ENCODE measurements at regions of chr1 and their contacts with region 1.

Region 1: GRCh38 chr1:41783189-41783639 is 135.5 kb downstream of the HIVEP3 start:
- DNase-seq: peak; percentile 91
- H3K4me3 ChIP-seq: no peak overlapping the region
- H3K27ac ChIP-seq: no peak overlapping the region
- H3K4me1 ChIP-seq: peaks cover 12% of the 10 kb centered on the region
- H3K27me3 ChIP-seq: no peaks in the 10 kb centered on the region
- CTCF ChIP-seq: no peak

Region 2: DNA sequence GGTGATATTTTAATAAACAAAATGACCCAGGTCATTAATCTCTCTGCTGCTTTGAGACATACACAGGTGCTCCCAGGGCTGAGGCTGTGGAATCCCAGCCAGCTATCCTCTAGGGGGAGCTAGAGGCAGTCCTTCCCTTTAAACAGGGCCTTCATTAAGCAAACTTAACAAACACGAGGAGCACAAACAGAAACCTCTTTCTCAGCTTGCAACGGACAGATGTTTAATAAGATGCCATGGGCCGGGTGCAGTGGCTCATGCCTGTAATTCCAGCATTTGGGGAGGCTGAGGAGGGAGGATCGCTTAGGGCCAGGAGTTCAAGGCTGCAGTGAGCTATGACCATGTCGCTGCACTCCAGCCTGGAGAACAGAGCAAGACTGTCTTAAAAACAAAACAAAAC is 28.8 kb after region 1 on chr1:
- CTCF ChIA-PET with region 1: no interaction called
- POLR2A ChIA-PET with region 1: no interaction called
- intact Hi-C with region 1: no loop called
- DNase-seq: peak; percentile 75
- H3K4me3 ChIP-seq: no peak overlapping the region
- H3K27ac ChIP-seq: peak overlapping the region; percentile 23
- H3K4me1 ChIP-seq: no peaks in the 10 kb centered on the region
- H3K27me3 ChIP-seq: no peaks in the 10 kb centered on the region
- CTCF ChIP-seq: peak; percentile 92

Region 3: GRCh38 chr1:41846625-41847405 is 63.6 kb after region 1 on chr1:
- CTCF ChIA-PET with region 1: no interaction called
- POLR2A ChIA-PET with region 1: interaction called, 12 read pairs
- intact Hi-C with region 1: no loop called
- DNase-seq: no peak
- H3K4me3 ChIP-seq: no peak overlapping the region
- H3K27ac ChIP-seq: no peak overlapping the region
- H3K4me1 ChIP-seq: no peaks in the 10 kb centered on the region
- H3K27me3 ChIP-seq: no peaks in the 10 kb centered on the region
- CTCF ChIP-seq: no peak

Region 4: DNA sequence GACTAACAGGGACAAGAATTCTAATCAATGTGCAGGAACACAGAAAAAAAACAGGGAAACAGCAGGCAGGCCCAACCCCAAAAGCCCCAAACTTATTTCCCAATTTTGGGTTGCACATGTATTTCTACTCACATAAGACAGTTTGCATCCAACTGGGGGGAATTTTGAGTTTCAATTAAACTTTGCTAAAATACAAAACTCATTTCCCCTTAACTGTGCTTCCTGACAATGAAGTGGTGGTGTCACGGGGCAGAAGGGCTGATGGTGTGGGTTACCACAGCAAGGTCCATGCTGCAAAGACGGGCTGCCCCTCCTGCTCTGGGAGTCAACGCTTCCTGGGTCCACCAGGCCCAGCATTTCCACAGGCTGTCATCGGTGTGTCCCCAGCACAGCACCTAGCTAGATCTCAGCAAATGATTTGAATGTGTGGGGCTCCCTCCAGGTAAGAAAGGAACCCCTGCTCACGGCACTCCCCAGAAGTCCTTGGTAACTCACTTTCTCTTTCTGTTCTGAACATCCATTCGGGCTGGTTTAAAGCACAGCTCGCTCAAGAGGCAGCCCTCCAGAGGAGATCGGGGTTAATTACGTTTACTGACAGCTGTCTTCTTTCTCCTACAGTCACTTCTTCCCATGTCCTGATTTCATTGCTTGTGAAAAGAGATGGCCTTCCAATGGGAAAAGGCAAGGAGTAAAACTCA is 108.1 kb after region 1 on chr1:
- CTCF ChIA-PET with region 1: no interaction called
- POLR2A ChIA-PET with region 1: interaction called, 22 read pairs
- intact Hi-C with region 1: no loop called
- DNase-seq: no peak
- H3K4me3 ChIP-seq: no peak overlapping the region
- H3K27ac ChIP-seq: no peak overlapping the region
- H3K4me1 ChIP-seq: no peaks in the 10 kb centered on the region
- H3K27me3 ChIP-seq: no peaks in the 10 kb centered on the region
- CTCF ChIP-seq: no peak

Region 5: DNA sequence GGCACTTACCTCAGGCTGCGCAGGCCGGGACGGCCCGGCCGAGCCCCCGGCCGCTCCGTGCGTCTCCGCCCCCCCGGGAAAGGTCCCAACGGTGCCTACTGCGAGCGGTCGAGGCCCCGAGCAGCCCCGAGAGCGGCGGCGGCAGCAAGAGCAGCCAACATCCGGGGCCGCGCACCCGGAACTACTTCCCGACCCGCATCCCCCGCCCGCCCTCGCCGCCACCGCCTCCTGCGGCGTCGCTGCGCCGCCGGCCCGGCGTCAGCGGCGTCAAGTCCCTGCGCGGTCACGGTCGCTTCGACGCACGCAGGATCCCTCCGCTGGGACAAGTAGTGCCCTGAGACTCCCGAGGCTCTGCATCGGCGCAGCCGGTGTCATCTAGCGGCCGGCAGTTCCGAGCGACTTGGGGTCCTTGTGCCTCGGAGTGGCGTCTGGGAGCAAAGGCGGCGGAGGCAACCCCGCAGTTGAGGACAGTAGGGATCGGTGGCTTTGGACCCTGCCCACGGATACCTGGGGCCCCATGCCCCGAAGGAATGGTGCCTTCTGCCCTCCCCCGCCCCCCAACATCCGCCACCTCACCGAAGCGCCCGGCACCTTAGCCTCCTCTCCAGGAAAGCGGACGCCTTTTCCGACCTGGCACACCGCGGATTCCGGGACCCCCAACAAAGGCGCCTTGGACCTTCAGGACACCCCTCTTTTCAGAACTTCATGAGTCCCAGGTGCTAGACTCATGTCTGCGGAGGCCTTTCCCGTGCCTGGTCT is 552.0 kb after region 1 on chr1 and contains the start of gene FOXJ3:
- CTCF ChIA-PET with region 1: no interaction called
- POLR2A ChIA-PET with region 1: no interaction called
- intact Hi-C with region 1: no loop called
- DNase-seq: peak; percentile 98
- H3K4me3 ChIP-seq: peak within 1 kb of the TSS; percentile 88
- H3K27ac ChIP-seq: peak within 1 kb of the TSS; percentile 87
- H3K4me1 ChIP-seq: peaks cover 12% of the 10 kb centered on the region
- H3K27me3 ChIP-seq: no peaks in the 10 kb centered on the region
- CTCF ChIP-seq: no peak
- total RNA-seq, gene FOXJ3: 55.4 and 57.9 TPM in 2 replicates